ENCODE measurements at regions of chr5 and their contacts with region 1.

Region 1: DNA sequence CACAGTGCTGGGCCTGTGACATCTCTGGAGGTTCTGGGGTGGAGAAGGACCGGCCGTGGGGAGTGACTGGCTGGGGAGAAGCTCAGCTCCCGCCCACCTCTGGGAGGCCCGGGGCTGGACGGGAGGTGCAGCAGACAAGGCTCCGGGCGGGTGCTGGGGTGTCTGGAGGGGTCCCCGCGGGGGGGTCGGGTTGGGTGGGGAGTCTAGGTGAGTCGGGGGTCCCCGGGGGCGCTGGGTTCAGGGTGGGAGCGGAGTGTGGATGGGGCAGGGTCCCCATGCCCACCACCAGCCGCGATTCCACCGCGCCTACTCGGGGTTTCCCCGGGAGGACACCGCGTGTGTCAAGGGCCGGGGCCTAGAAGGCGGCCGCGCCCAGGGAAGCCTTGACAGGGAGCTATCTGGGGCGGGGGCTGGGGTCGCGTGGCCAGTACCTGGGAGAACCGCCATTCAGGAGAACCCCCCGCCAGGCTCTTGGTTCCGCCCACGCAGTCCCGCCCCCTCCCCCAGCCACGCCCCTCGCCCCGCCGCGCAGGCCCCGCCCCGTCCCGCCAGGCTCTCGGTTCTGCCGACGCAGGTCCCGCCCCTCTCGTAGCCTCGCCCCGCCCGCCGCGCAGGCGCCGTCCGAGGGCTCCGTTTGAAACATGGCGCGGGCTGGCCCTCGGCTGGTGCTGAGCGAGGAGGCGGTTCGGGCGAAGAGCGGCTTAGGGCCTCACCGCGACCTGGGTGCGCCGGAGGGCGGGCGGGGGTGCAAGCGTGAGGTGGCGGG is at the start of gene CEP72:
- DNase-seq: peak; percentile 95
- H3K4me3 Mint-ChIP-seq: peak within 1 kb of the TSS; percentile 93
- H3K27ac Mint-ChIP-seq: peak within 1 kb of the TSS; percentile 63
- H3K4me1 Mint-ChIP-seq: peaks cover 43% of the 10 kb centered on the region
- H3K27me3 Mint-ChIP-seq: peaks cover 6% of the 10 kb centered on the region
- total RNA-seq, gene CEP72: 21.6 to 22.5 TPM

Region 2: DNA sequence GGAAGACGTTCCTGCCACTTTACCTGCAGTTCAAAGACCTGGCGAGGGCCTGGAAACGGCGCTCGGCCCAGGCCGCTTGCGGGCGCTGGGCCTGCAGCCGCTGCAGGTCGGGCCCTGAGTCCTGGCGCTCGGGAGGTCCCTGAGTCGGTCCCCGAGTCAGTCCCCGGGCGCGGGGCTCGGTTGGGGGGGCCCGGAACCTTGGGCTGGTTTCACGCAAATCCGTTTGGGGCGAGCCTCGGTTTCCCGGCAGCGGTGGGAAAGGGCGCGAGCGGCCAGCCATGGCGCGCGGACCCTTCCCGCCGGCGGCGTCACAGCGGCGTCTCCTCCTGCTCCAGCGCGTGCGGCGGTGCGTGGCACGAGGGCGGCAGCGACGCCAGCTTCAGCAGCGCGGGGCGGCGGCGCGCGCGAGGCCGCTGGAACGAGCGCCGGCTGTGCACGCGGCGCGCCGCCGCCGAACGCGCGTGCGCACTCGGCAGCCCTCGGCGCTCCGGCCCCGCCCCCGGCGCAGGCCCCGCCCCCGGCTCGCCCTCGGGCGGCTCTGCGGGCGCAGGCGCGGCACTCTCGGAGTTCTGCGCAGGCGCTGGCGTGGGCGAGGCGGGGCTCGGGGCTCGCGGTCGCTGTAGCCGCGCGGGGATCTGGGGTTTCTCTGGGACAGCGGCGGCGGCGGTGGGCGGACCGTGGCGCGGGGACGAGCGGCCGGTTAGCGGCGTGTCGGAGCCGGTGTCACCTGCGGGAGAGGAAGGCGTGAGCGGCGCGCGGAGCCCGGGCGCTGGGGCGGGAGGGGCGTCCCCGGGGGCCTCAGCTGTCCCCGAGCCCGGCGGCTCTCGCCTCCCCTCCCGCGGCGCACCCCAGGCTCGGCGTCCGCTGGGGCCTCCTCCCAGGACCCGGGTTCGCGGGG is 139.0 kb before region 1 on chr5:
- CTCF ChIA-PET with region 1: no interaction called
- POLR2A ChIA-PET with region 1: no interaction called
- intact Hi-C with region 1: loop called (anchors 1 kb)
- DNase-seq: peak; percentile 91
- H3K4me3 Mint-ChIP-seq: peak overlapping the region; percentile 84
- H3K27ac Mint-ChIP-seq: peak overlapping the region; percentile 81
- H3K4me1 Mint-ChIP-seq: peaks cover 24% of the 10 kb centered on the region
- H3K27me3 Mint-ChIP-seq: peaks cover 2% of the 10 kb centered on the region

Region 3: GRCh38 chr5:773517-774264 is 161.8 kb after region 1 on chr5:
- CTCF ChIA-PET with region 1: no interaction called
- POLR2A ChIA-PET with region 1: no interaction called
- intact Hi-C with region 1: no loop called
- DNase-seq: peak; percentile 8
- H3K4me3 Mint-ChIP-seq: no peak overlapping the region
- H3K27ac Mint-ChIP-seq: no peak overlapping the region
- H3K4me1 Mint-ChIP-seq: no peaks in the 10 kb centered on the region
- H3K27me3 Mint-ChIP-seq: no peaks in the 10 kb centered on the region

Region 4: GRCh38 chr5:892394-893136 is 280.7 kb after region 1 on chr5 and contains the starts of genes BRD9 and TRIP13:
- CTCF ChIA-PET with region 1: no interaction called
- POLR2A ChIA-PET with region 1: no interaction called
- intact Hi-C with region 1: loop called (anchors 5 kb)
- DNase-seq: peak; percentile 89
- H3K4me3 Mint-ChIP-seq: peak within 1 kb of the TSS; percentile 85
- H3K27ac Mint-ChIP-seq: peak within 1 kb of the TSS; percentile 84
- H3K4me1 Mint-ChIP-seq: peaks cover 25% of the 10 kb centered on the region
- H3K27me3 Mint-ChIP-seq: no peaks in the 10 kb centered on the region
- total RNA-seq, gene BRD9: 43.1 to 50.7 TPM
- total RNA-seq, gene TRIP13: 32.4 to 33.9 TPM

Measured in activated CD4-positive, alpha-beta memory T cell treated with anti-CD3 and anti-CD28 coated beads for 36 hours (primary cell).